ENCODE measurements at regions of chrX and their contacts with region 1.

Region 1: DNA sequence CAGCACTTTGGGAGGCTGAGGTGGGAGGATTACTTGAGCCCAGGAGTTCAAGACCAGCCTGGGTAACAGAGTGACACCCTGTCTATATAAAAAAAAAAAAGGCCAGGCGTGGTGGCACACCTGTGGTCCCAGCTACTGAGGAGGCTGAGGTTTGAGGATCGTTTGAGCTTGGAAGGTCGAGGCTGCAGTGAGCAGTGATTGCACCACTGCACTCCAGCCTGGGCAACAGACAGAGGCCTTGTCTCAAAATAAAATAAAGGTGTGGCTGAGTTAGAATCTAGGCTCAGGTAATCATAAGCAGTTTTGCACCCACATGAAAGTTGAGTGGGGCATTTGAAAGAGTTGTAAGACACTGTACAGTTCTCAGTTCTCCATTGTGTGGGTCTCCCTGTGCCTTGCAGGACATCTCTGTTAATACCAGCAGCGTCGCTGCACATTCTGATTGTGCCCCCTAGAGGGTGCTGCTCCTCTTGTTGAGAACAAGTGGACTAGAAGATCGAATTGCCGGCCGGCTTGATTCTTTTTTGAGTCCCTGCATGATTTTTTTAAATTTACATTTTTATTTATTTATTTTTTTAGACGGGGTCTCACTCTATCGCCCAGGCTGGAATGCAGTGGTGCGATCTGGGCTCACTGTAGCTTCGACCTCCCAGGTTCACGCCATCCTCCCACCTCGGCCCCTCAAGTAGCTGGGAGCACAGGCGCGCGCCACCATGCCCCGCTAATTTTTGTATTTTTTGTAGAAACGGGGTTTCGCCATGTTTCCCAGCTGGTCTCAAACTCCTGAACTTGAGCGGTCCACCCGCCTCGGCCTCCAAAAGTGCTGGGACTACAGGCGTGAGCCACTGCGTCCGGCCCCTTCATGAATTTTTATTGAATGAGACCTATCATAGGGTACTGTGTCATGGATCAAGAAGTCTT is 73.6 kb upstream of the RBMX start:
- DNase-seq: peak; percentile 73
- H3K4me3 Mint-ChIP-seq: no peak overlapping the region
- H3K27ac Mint-ChIP-seq: no peak overlapping the region
- H3K4me1 Mint-ChIP-seq: no peaks in the 10 kb centered on the region
- H3K27me3 Mint-ChIP-seq: no peaks in the 10 kb centered on the region
- CTCF ChIP-seq: peak; percentile 54

Region 2: DNA sequence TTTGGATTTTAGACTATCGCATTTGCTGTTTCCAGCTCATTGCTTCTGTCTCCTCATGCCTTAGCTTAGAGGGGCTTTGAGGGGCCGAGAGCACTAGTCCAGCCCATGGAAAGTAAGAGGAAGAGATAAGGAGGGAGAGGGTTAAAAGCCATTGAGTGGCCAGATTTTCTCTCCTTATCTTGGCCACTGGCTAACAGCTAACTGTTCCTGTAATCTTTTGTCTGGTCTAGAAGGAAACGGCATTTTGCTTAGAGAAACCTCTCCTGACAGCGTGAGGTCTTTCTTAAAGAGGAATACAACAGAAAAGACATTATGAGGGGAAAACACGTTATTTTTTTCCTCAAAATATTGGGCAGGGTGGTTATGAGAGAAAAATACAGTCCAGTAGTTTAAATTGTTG is 71.8 kb after region 1 on chrX:
- CTCF ChIA-PET with region 1: no interaction called
- POLR2A ChIA-PET with region 1: no interaction called
- intact Hi-C with region 1: no loop called
- DNase-seq: no peak
- H3K4me3 Mint-ChIP-seq: no peak overlapping the region
- H3K27ac Mint-ChIP-seq: no peak overlapping the region
- H3K4me1 Mint-ChIP-seq: no peaks in the 10 kb centered on the region
- H3K27me3 Mint-ChIP-seq: no peaks in the 10 kb centered on the region
- CTCF ChIP-seq: no peak

Region 3: DNA sequence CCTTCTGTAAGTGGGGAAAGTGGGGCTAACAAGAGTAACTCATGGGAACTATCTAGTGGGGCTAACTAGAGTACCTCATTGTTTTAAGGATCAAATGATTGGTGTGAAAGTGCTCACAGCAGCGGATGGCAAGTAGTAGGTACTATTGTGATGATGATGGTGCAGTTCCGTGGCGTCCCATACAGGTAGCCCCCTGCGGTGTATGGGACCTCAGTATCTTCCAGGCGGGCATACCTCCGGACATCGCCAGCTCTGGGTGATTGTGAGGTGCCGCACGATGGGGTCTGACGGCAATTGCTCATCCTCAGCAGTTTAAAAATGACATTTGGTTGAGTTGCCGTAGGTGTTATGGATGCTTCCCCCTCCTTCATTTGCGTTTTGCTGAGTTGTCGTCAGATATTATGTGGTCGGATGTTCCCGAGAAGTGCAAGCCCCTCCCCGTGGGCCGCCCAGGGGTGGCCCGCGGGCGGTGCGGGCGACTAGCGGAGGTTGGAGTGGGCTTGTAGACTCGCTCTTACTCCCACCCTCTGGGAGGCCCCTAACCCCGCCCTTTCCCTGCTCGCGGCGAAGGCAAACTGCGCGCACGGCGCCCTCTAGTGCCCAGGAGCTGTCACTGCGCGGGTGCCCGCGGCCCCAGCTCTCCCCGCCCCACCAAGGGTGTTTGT is 98.0 kb after region 1 on chrX:
- CTCF ChIA-PET with region 1: interaction called, 5 read pairs
- POLR2A ChIA-PET with region 1: no interaction called
- intact Hi-C with region 1: loop called (anchors 1 kb)
- DNase-seq: peak; percentile 43
- H3K4me3 Mint-ChIP-seq: peak overlapping the region; percentile 66
- H3K27ac Mint-ChIP-seq: no peak overlapping the region
- H3K4me1 Mint-ChIP-seq: peaks cover 7% of the 10 kb centered on the region
- H3K27me3 Mint-ChIP-seq: peaks cover 50% of the 10 kb centered on the region
- CTCF ChIP-seq: peak; percentile 81

Region 4: DNA sequence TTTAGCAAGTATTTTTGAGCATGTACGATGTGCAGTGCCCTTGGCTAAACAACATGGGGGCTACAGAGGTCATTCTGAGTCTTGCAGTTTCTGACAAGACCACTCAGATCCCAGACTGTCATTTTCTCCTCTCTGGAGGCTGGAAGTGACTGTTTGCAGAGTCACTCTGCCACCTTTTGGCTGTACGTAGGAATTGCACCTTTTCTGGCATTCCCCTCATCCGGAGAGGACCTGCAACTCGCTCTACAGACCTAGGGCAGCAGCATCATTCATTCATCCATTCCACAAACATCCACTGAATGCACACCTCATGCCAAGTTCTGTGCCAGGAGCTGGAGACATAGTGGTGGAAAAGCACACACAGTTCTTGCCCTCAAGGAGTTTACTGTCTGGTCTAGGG is 240.0 kb after region 1 on chrX:
- CTCF ChIA-PET with region 1: interaction called, 6 read pairs
- POLR2A ChIA-PET with region 1: no interaction called
- intact Hi-C with region 1: loop called (anchors 1 kb)
- DNase-seq: peak; percentile 61
- H3K4me3 Mint-ChIP-seq: no peak overlapping the region
- H3K27ac Mint-ChIP-seq: no peak overlapping the region
- H3K4me1 Mint-ChIP-seq: peaks cover 8% of the 10 kb centered on the region
- H3K27me3 Mint-ChIP-seq: peaks cover 12% of the 10 kb centered on the region
- CTCF ChIP-seq: peak; percentile 60

Region 5: DNA sequence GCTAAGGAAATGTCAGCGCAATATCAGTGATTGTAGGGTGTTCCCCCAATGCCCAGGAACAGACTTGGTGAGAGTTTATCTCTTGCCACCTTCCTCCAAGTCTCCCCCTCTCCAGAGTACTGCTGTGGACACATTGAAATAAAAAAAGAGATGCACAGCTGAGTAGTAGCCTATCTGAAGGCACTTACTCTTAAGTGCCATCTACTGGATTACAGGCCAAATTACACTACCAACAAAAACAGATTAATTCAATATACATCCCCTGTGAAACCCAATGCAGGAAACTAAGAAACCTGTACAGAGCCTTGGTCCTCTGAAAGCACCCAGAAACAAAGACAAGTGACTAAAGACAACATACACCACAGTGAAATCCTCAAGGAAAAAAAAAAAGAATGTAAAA is 1072.1 kb after region 1 on chrX:
- CTCF ChIA-PET with region 1: interaction called, 4 read pairs
- POLR2A ChIA-PET with region 1: no interaction called
- intact Hi-C with region 1: loop called (anchors 2 kb)
- DNase-seq: peak; percentile 14
- H3K4me3 Mint-ChIP-seq: no peak overlapping the region
- H3K27ac Mint-ChIP-seq: no peak overlapping the region
- H3K4me1 Mint-ChIP-seq: no peaks in the 10 kb centered on the region
- H3K27me3 Mint-ChIP-seq: no peaks in the 10 kb centered on the region
- CTCF ChIP-seq: peak; percentile 49

Region 6: DNA sequence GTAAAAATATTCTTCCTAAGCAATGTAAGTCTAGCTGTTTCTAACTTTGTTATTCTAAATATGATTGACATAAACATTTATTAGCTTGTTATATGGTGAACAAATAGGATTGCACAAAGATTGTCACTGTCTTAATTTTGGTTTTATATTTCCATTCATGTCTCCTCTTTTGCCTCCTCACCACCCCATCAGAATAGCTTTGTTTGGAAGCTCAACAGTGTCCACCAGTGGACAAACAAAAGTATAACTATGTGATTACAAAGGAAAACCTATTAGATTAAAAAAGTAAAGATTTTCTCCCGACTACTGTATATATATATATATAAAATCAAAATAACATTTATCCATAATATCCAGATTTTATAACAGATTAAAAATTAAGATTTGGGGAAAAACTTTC is 1080.0 kb after region 1 on chrX:
- CTCF ChIA-PET with region 1: interaction called, 4 read pairs
- POLR2A ChIA-PET with region 1: no interaction called
- intact Hi-C with region 1: loop called (anchors 2 kb)
- DNase-seq: peak; percentile 18
- H3K4me3 Mint-ChIP-seq: no peak overlapping the region
- H3K27ac Mint-ChIP-seq: no peak overlapping the region
- H3K4me1 Mint-ChIP-seq: no peaks in the 10 kb centered on the region
- H3K27me3 Mint-ChIP-seq: no peaks in the 10 kb centered on the region
- CTCF ChIP-seq: no peak

Measured in MCF 10A (cell line).